ENCODE measurements at regions of chr12 and their contacts with region 1.

Region 1: GRCh38 chr12:42023733-42024494 is 120.8 kb downstream of the GXYLT1 start:
- DNase-seq: peak; percentile 80
- ATAC-seq: peak; percentile 84

Region 2: GRCh38 chr12:41277116-41277945 is 746.6 kb before region 1 on chr12:
- intact Hi-C with region 1: loop called (anchors 2 kb)
- DNase-seq: no peak
- ATAC-seq: no peak

Region 3: GRCh38 chr12:41932470-41932991 is 91.4 kb before region 1 on chr12:
- intact Hi-C with region 1: loop called (anchors 10 kb)
- DNase-seq: peak; percentile 92
- ATAC-seq: peak; percentile 93

Region 4: GRCh38 chr12:42056130-42056529 is 32.2 kb after region 1 on chr12:
- intact Hi-C with region 1: no loop called
- DNase-seq: no peak
- ATAC-seq: no peak

Measured in Right ventricle myocardium inferior (tissue), 1 donor.